HCT116 (cell line): ENCODE measurements at regions of chr1 and their contacts with region 1.

Region 1: GRCh38 chr1:21189906-21190500 is 13.3 kb upstream of the EIF4G3 start:
- DNase-seq: no peak
- ATAC-seq: no peak
- H3K4me3 ChIP-seq: no peak overlapping the region
- H3K27ac ChIP-seq: no peak overlapping the region
- H3K4me1 ChIP-seq: peaks cover 3% of the 10 kb centered on the region in 2 experiments; a peak in 3 of 4 replicates
- H3K27me3 ChIP-seq: no peaks in the 10 kb centered on the region
- CTCF ChIP-seq: no peak
- POLR2A ChIP-seq: no peak
- RAD21 ChIP-seq: no peak

Region 2: GRCh38 chr1:20786253-20787028 is 403.6 kb before region 1 on chr1:
- CTCF ChIA-PET with region 1: interaction called, 10 read pairs
- POLR2A ChIA-PET with region 1: interaction called, 3 read pairs
- RAD21 ChIA-PET with region 1: interaction called in 1 of 2 experiments, 3 read pairs
- intact Hi-C with region 1: loop called (anchors 10 kb)
- DNase-seq: peak; percentile 85
- ATAC-seq: peak; percentile 87
- H3K4me3 ChIP-seq: peak overlapping the region; percentile 88 to 91
- H3K27ac ChIP-seq: peak overlapping the region; percentile 93
- H3K4me1 ChIP-seq: peaks cover 14 to 21% of the 10 kb centered on the region in 2 experiments
- H3K27me3 ChIP-seq: no peaks in the 10 kb centered on the region
- CTCF ChIP-seq: no peak
- POLR2A ChIP-seq: peak; percentile 42
- RAD21 ChIP-seq: no peak

Region 3: GRCh38 chr1:20981915-20982314 is 208.1 kb before region 1 on chr1:
- CTCF ChIA-PET with region 1: interaction called, 23 read pairs
- POLR2A ChIA-PET with region 1: interaction called, 3 read pairs
- RAD21 ChIA-PET with region 1: interaction called, 3 to 6 read pairs
- intact Hi-C with region 1: loop called (anchors 1 kb)
- DNase-seq: no peak
- ATAC-seq: peak; percentile 67; the same call in 1 of the 2 replicates
- H3K4me3 ChIP-seq: no peak overlapping the region
- H3K27ac ChIP-seq: no peak overlapping the region
- H3K4me1 ChIP-seq: no peaks in the 10 kb centered on the region
- H3K27me3 ChIP-seq: no peaks in the 10 kb centered on the region
- CTCF ChIP-seq: peak; percentile 15 to 48 (median 29); a peak in 2 of 6 replicates
- POLR2A ChIP-seq: no peak
- RAD21 ChIP-seq: peak; percentile 65

Region 4: GRCh38 chr1:21238141-21238800 is 48.3 kb after region 1 on chr1:
- CTCF ChIA-PET with region 1: no interaction called
- POLR2A ChIA-PET with region 1: no interaction called
- RAD21 ChIA-PET with region 1: no interaction called
- intact Hi-C with region 1: no loop called
- DNase-seq: no peak
- ATAC-seq: no peak
- H3K4me3 ChIP-seq: no peak overlapping the region
- H3K27ac ChIP-seq: no peak overlapping the region
- H3K4me1 ChIP-seq: no peaks in the 10 kb centered on the region
- H3K27me3 ChIP-seq: no peaks in the 10 kb centered on the region
- CTCF ChIP-seq: no peak
- POLR2A ChIP-seq: no peak
- RAD21 ChIP-seq: no peak